GM12878 (cell line): ENCODE measurements at regions of chr3 and their contacts with region 1.

Region 1: GRCh38 chr3:150763122-150763841 is at the start of gene SIAH2:
- DNase-seq: peak; percentile 71
- ATAC-seq: peak; percentile 78
- H3K4me3 ChIP-seq: peak within 1 kb of the TSS; percentile 94
- H3K27ac ChIP-seq: peak within 1 kb of the TSS; percentile 77
- H3K4me1 ChIP-seq: peaks cover 29% of the 10 kb centered on the region
- H3K27me3 ChIP-seq: no peaks in the 10 kb centered on the region
- CTCF ChIP-seq: no peak
- EP300 ChIP-seq: no peak; a peak in 1 of 4 replicates
- POLR2A ChIP-seq: peak; percentile 86
- RAD21 ChIP-seq: no peak
- polyA plus RNA-seq, gene SIAH2: 6.1 to 14.2 TPM

Region 2: DNA sequence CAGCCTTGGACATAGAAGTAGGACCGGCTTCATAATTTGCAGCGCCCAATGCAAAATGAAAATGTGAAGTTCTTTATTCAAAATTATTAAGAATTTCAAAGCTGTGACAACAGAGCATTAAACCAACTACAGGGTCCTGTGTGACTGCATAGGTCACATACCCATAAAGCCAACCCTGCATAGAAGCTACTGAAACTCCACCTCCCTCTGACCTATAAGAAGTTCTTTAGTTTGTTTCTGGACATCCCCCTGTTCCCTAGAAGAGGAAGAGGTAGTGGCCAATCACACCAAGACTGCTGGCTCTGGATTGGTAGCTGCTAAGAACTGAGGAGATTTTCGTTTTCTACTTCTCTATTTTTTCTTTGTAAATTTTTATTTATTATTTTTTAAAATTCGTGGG is 169.1 kb before region 1 on chr3:
- CTCF ChIA-PET with region 1: interaction called, 5 read pairs
- POLR2A ChIA-PET with region 1: interaction called, 31 read pairs
- RAD21 ChIA-PET with region 1: interaction called, 22 read pairs
- SMC1A ChIA-PET with region 1: interaction called, 6 read pairs
- in situ Hi-C with region 1: no loop called
- intact Hi-C with region 1: no loop called
- DNase-seq: no peak
- ATAC-seq: no peak
- H3K4me3 ChIP-seq: no peak overlapping the region
- H3K27ac ChIP-seq: no peak overlapping the region
- H3K4me1 ChIP-seq: peaks cover 10% of the 10 kb centered on the region
- H3K27me3 ChIP-seq: no peaks in the 10 kb centered on the region
- CTCF ChIP-seq: no peak
- EP300 ChIP-seq: no peak
- POLR2A ChIP-seq: no peak
- RAD21 ChIP-seq: no peak

Region 3: DNA sequence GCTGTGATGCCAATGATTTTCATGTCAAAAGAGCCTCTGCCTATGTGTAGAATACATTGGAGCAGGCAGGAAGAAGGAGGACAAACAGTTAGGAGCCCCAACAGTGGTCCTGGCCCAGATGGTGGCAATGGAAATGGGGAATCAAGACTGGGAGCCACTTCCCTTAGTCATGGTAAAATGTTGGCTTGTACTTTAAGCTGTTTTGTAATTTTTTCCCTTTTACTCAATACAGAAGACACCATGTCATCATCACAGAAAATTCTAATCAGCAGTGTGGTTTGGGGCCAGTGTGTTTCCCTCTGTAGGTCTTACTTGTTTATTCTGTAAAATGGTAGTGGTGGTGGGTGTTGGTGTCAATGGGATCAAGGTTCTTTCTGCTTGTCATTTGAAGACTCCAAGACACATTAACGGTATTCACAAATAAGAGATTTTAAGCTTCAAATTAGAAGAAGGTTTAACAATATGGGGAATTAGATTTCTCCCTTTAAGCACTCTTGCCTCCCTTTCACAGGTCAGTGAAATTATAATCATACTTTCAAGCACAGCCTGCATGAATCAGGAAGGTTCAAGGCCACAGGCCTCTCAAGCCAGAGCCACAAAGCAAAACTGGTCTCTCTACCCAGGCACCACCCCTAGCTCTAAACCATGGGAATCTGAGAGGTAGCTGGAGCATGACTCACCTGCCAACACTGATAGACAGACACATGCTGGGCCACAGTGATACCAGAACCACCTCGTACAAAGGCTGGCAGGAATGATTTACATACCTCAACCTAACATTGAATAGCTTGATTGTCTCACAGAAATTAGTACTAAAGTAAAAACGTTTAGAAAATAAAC is 25.2 kb before region 1 on chr3:
- CTCF ChIA-PET with region 1: interaction called, 14 read pairs
- POLR2A ChIA-PET with region 1: interaction called, 28 read pairs
- RAD21 ChIA-PET with region 1: interaction called, 30 read pairs
- SMC1A ChIA-PET with region 1: interaction called, 27 read pairs
- in situ Hi-C with region 1: no loop called
- intact Hi-C with region 1: loop called (anchors 2 kb)
- DNase-seq: peak; percentile 57
- ATAC-seq: peak; percentile 64
- H3K4me3 ChIP-seq: no peak overlapping the region
- H3K27ac ChIP-seq: peak overlapping the region; percentile 54
- H3K4me1 ChIP-seq: peaks cover 39% of the 10 kb centered on the region
- H3K27me3 ChIP-seq: no peaks in the 10 kb centered on the region
- CTCF ChIP-seq: no peak
- EP300 ChIP-seq: no peak
- POLR2A ChIP-seq: no peak
- RAD21 ChIP-seq: no peak

Region 4: GRCh38 chr3:150775091-150775501 is 11.8 kb after region 1 on chr3:
- CTCF ChIA-PET with region 1: interaction called, 6 read pairs
- POLR2A ChIA-PET with region 1: interaction called, 5 read pairs
- RAD21 ChIA-PET with region 1: interaction called, 3 read pairs
- SMC1A ChIA-PET with region 1: interaction called, 28 read pairs
- in situ Hi-C with region 1: no loop called
- intact Hi-C with region 1: no loop called
- DNase-seq: no peak
- ATAC-seq: no peak
- H3K4me3 ChIP-seq: no peak overlapping the region
- H3K27ac ChIP-seq: no peak overlapping the region
- H3K4me1 ChIP-seq: no peaks in the 10 kb centered on the region
- H3K27me3 ChIP-seq: no peaks in the 10 kb centered on the region
- CTCF ChIP-seq: no peak
- EP300 ChIP-seq: no peak
- POLR2A ChIP-seq: no peak
- RAD21 ChIP-seq: no peak

Region 5: GRCh38 chr3:150850191-150850590 is 86.9 kb after region 1 on chr3:
- CTCF ChIA-PET with region 1: no interaction called
- POLR2A ChIA-PET with region 1: no interaction called
- RAD21 ChIA-PET with region 1: no interaction called
- SMC1A ChIA-PET with region 1: no interaction called
- in situ Hi-C with region 1: no loop called
- intact Hi-C with region 1: no loop called
- DNase-seq: no peak
- ATAC-seq: no peak
- H3K4me3 ChIP-seq: no peak overlapping the region
- H3K27ac ChIP-seq: no peak overlapping the region
- H3K4me1 ChIP-seq: no peaks in the 10 kb centered on the region
- H3K27me3 ChIP-seq: no peaks in the 10 kb centered on the region
- CTCF ChIP-seq: no peak
- EP300 ChIP-seq: no peak
- POLR2A ChIP-seq: no peak
- RAD21 ChIP-seq: no peak

Region 6: DNA sequence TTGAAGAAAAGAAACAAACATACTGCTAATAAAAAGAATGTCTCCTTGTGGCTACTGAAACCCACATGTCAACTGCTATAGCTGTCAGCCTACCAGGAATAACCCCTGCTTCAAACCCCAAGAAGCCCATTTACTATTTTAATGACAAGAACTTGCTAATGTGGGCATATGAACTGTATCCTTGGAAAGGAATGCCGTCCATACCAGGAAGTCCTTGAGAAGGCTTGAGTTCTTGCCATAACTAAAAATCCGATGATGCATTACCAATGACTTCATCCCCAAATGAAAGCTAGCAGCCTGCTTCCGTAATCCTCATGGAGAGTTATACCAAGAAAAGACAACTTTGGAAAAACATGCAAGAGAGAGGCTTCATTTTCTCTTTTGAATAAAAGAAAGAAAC is 107.1 kb after region 1 on chr3:
- CTCF ChIA-PET with region 1: interaction called, 18 read pairs
- POLR2A ChIA-PET with region 1: no interaction called
- RAD21 ChIA-PET with region 1: interaction called, 6 read pairs
- SMC1A ChIA-PET with region 1: interaction called, 5 read pairs
- in situ Hi-C with region 1: no loop called
- intact Hi-C with region 1: no loop called
- DNase-seq: no peak
- ATAC-seq: no peak
- H3K4me3 ChIP-seq: no peak overlapping the region
- H3K27ac ChIP-seq: no peak overlapping the region
- H3K4me1 ChIP-seq: no peaks in the 10 kb centered on the region
- H3K27me3 ChIP-seq: no peaks in the 10 kb centered on the region
- CTCF ChIP-seq: no peak
- EP300 ChIP-seq: no peak
- POLR2A ChIP-seq: no peak
- RAD21 ChIP-seq: no peak